ENCODE measurements at regions of chr16 and their contacts with region 1.

Region 1: GRCh38 chr16:88442727-88443576 is 10.1 kb upstream of the ZFPM1 start:
- DNase-seq: peak; percentile 89
- ATAC-seq: peak; percentile 96
- H3K4me3 Mint-ChIP-seq: no peak overlapping the region
- H3K27ac Mint-ChIP-seq: no peak overlapping the region
- H3K4me1 Mint-ChIP-seq: peaks cover 3% of the 10 kb centered on the region
- H3K27me3 Mint-ChIP-seq: no peaks in the 10 kb centered on the region

Region 2: DNA sequence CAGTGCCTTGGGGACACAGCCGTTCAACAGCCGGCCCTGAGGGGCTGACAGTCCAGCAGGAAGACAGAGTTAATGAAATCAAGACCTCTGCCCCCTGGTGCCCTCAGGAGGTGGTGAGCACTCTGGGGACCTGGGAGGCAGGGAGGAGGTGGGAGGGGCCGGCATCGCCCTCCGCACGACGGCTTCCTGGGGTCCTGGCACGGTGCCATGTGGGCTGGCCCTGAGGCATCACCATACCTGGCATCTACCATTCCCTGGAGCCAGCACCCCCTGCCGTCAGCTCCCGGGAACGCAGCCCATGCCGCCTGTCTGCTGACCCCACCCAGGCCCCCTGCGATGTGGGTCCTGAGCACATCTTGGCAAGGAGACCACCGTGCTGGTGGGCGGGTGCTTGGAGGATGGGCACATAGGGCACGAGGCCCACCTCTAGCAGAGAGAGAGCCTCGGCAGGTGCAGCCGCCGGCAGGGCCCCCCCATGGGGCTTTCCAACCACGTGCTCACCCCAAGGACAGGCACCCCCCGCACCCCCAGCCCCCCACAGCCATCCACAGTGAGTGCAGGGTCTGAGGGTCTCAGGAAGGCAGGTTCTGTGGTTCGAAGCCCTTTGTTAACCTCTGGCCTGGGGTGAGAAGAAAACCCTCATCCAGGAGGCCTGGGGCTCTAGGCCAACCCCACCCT is 62.6 kb after region 1 on chr16:
- CTCF ChIA-PET with region 1: interaction called, 3 read pairs
- POLR2A ChIA-PET with region 1: no interaction called
- intact Hi-C with region 1: loop called in 1 of 2 experiments (anchors 1 kb)
- DNase-seq: peak; percentile 84
- ATAC-seq: peak; percentile 82
- H3K4me3 Mint-ChIP-seq: no peak overlapping the region
- H3K27ac Mint-ChIP-seq: no peak overlapping the region
- H3K4me1 Mint-ChIP-seq: no peaks in the 10 kb centered on the region
- H3K27me3 Mint-ChIP-seq: no peaks in the 10 kb centered on the region

Region 3: DNA sequence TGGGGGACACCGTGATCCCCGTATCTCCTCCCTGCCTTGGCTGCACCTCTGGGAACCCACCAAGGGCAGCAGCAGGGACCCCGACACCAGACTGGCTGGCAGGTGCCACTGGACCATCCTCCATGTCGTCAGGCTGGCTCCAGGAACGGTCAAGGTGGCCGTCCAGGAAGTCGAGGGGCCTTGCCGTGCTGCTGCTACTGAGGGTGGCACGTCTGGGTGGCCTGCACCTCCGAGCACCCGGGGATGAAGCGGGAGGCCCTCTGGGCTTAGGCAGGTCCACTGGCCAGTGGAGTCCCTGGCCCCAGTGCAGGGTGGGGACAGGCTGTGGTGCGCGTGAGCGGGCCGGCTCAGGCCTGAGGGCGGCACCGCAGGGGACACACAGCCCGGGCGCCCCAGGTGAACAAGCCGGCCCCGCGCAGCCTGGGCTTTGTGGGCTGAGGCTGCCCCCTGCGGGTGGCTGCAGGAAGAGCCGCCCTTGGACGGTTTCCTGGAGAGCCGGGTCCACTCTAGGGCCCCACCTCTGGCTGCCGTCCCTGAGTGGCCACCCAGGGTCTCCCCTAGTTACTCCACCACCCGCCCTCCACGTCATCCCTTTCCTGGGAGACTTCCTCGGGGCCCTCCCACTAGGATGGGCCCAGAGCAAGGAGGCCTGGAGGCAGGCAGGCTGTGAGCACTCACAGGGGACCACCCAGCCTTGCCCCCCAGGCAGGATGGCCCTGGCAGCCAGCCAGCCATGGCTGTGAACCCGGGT is 84.4 kb after region 1 on chr16:
- CTCF ChIA-PET with region 1: interaction called, 3 read pairs
- POLR2A ChIA-PET with region 1: no interaction called
- intact Hi-C with region 1: loop called (anchors 1 kb)
- DNase-seq: peak; percentile 78
- ATAC-seq: peak; percentile 81
- H3K4me3 Mint-ChIP-seq: no peak overlapping the region
- H3K27ac Mint-ChIP-seq: no peak overlapping the region
- H3K4me1 Mint-ChIP-seq: peaks cover 2% of the 10 kb centered on the region
- H3K27me3 Mint-ChIP-seq: no peaks in the 10 kb centered on the region

Region 4: GRCh38 chr16:88561485-88562369 is 118.8 kb after region 1 on chr16:
- CTCF ChIA-PET with region 1: interaction called, 10 read pairs
- POLR2A ChIA-PET with region 1: no interaction called
- intact Hi-C with region 1: loop called (anchors 1 kb)
- DNase-seq: peak; percentile 72
- ATAC-seq: peak; percentile 49
- H3K4me3 Mint-ChIP-seq: no peak overlapping the region
- H3K27ac Mint-ChIP-seq: no peak overlapping the region
- H3K4me1 Mint-ChIP-seq: peaks cover 12% of the 10 kb centered on the region
- H3K27me3 Mint-ChIP-seq: peaks cover 3% of the 10 kb centered on the region

Measured in activated CD4-positive, alpha-beta T cell treated with anti-CD3 and anti-CD28 coated beads for 36 hours (primary cell).